ENCODE measurements at regions of chr3 and their contacts with region 1.

Region 1: DNA sequence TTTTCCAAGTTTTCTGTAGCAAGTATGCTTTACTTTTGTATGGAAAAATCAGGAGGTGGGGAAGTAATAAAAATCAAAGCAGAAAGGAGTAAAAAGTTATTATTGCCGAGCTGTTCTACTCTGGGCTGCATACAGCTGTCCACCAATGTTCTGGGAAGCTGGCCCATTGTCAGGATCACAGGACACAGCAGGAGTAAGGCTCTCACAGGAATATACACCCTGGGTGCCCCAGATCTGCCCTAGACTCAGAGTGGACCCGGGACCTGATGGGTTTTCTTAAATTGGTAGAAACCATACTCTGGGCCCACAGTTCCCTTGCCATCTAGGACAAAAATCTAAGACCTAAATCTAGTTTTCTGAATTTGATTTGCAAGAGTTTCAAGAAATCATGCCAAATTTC is 60.4 kb downstream of the TNIK start:
- DNase-seq: no peak
- ATAC-seq: no peak
- H3K4me3 ChIP-seq: no peak overlapping the region
- H3K27ac ChIP-seq: no peak overlapping the region
- H3K4me1 ChIP-seq: no peaks in the 10 kb centered on the region
- H3K27me3 ChIP-seq: no peaks in the 10 kb centered on the region
- CTCF ChIP-seq: no peak
- EP300 ChIP-seq: no peak
- POLR2A ChIP-seq: no peak
- RAD21 ChIP-seq: no peak

Region 2: GRCh38 chr3:170717410-170718402 is 682.1 kb before region 1 on chr3:
- CTCF ChIA-PET with region 1: no interaction called
- POLR2A ChIA-PET with region 1: no interaction called
- RAD21 ChIA-PET with region 1: no interaction called
- SMC1A ChIA-PET with region 1: no interaction called
- in situ Hi-C with region 1: no loop called
- intact Hi-C with region 1: no loop called
- DNase-seq: no peak
- ATAC-seq: no peak
- H3K4me3 ChIP-seq: no peak overlapping the region
- H3K27ac ChIP-seq: no peak overlapping the region
- H3K4me1 ChIP-seq: no peaks in the 10 kb centered on the region
- H3K27me3 ChIP-seq: no peaks in the 10 kb centered on the region; a peak in 1 of 4 replicates
- CTCF ChIP-seq: no peak
- EP300 ChIP-seq: no peak
- POLR2A ChIP-seq: no peak
- RAD21 ChIP-seq: no peak

Region 3: DNA sequence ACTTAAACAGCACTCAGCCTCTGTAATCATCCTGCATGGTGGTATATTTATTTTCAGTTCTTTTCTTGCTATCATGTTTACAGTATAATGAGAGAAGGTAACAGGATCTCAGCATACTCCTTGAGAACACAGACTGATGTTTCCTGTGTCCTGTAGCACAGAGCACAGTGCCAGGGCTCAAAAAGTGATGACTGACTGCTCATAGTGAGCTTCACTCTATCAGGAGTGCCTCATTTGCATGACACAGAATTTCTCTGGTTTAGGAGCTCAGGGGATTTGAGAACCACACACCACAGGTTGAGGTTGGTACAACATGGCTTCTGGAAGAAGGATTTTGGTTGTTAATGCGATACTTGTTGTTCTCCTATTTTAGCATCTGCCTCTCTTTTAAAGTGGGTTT is 304.8 kb before region 1 on chr3:
- CTCF ChIA-PET with region 1: no interaction called
- POLR2A ChIA-PET with region 1: no interaction called
- RAD21 ChIA-PET with region 1: no interaction called
- SMC1A ChIA-PET with region 1: no interaction called
- in situ Hi-C with region 1: no loop called
- intact Hi-C with region 1: no loop called
- DNase-seq: peak; percentile 19
- ATAC-seq: peak; percentile 77
- H3K4me3 ChIP-seq: no peak overlapping the region
- H3K27ac ChIP-seq: no peak overlapping the region
- H3K4me1 ChIP-seq: no peaks in the 10 kb centered on the region
- H3K27me3 ChIP-seq: no peaks in the 10 kb centered on the region
- CTCF ChIP-seq: no peak
- EP300 ChIP-seq: no peak
- POLR2A ChIP-seq: no peak
- RAD21 ChIP-seq: no peak

Region 4: GRCh38 chr3:171410186-171410585 is 10.3 kb after region 1 on chr3:
- CTCF ChIA-PET with region 1: interaction called, 6 read pairs
- POLR2A ChIA-PET with region 1: interaction called, 12 read pairs
- RAD21 ChIA-PET with region 1: interaction called, 7 read pairs
- SMC1A ChIA-PET with region 1: interaction called, 22 read pairs
- in situ Hi-C with region 1: no loop called
- intact Hi-C with region 1: no loop called
- DNase-seq: no peak
- ATAC-seq: no peak
- H3K4me3 ChIP-seq: no peak overlapping the region
- H3K27ac ChIP-seq: no peak overlapping the region
- H3K4me1 ChIP-seq: peaks cover 21% of the 10 kb centered on the region
- H3K27me3 ChIP-seq: no peaks in the 10 kb centered on the region
- CTCF ChIP-seq: no peak
- EP300 ChIP-seq: no peak
- POLR2A ChIP-seq: no peak
- RAD21 ChIP-seq: no peak

Region 5: DNA sequence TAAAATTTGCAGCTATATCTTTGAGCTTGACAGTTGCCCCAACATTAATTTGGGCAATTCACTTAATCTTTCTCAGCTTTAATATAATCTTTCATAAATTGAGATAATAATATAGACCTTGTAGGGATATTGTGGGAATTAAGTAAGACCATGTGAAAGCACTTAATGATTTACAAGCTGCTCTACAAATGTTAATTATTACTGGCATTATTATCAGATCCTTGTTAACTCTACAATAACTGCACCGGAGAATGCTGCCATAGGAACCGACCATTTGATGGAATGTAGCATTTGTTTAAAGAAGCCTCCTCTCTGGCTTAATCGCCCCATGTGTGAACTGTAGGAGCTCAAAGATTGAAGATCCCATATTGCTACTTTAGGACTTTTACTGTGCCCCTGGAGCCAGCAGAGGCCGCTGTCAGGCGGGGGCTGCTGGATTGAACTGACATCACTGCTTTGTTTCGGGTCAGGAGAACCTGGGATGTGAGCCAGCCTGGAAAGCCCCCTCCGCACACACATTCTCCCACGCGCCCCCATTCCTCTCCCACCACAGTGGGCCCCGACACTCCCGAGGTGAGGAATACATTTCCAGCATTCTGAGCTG is 214.6 kb after region 1 on chr3:
- CTCF ChIA-PET with region 1: no interaction called
- POLR2A ChIA-PET with region 1: no interaction called
- RAD21 ChIA-PET with region 1: no interaction called
- SMC1A ChIA-PET with region 1: no interaction called
- in situ Hi-C with region 1: no loop called
- intact Hi-C with region 1: no loop called
- DNase-seq: no peak
- ATAC-seq: peak; percentile 83
- H3K4me3 ChIP-seq: no peak overlapping the region
- H3K27ac ChIP-seq: no peak overlapping the region
- H3K4me1 ChIP-seq: no peaks in the 10 kb centered on the region
- H3K27me3 ChIP-seq: no peaks in the 10 kb centered on the region; a peak in 1 of 4 replicates
- CTCF ChIP-seq: peak; percentile 64 to 83 (median 67)
- EP300 ChIP-seq: no peak
- POLR2A ChIP-seq: no peak
- RAD21 ChIP-seq: peak; percentile 63

Measured in GM12878 (cell line).